ENCODE measurements at regions of chr5 and their contacts with region 1.

Region 1: GRCh38 chr5:132386644-132387286 is 17.3 kb downstream of the SLC22A5 start:
- DNase-seq: peak; percentile 46 to 89 (median 76)

Region 2: DNA sequence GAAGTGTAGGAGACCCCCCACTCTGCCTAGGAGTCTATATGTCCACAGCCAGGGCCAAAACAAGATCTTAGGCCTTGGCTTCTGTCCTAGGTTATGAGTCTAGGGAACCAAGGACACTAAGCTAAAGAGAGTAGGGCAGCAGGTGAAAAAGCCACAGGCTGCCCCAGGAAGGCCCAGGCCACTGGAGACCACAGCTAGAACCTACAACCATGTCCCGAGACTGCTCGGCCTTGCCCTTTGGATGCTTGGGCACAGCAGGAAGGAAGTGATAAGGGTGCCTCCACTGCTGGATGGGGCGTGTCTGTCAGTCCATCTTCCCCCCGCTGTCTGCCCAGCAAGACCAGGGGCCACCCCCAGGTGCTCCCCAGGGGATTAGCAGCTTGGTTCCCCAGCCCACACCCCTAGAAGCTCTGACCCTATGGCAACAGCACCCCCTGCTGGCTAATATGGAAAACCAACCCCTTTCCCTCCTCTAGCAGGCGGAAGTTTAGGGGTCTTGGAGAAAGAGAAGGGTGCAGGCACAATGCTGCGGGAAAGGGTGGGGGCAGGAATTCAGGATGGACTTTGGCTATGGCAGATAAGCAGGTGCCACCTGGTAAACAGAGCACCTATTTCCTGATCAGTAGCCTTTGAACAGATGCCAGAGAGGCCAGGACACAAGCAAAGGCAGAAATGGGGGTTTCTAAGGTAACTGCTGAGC is 114.3 kb after region 1 on chr5:
- intact Hi-C with region 1: loop called (anchors 2 kb)
- DNase-seq: peak in 40 of 42 donors; percentile 36 to 90 (median 72)

Measured in head of caudate nucleus (tissue), 42 donors.